HCT116 (cell line): ENCODE measurements at regions of chr6 and their contacts with region 1.

Region 1: GRCh38 chr6:113428702-113429101 is 428.4 kb upstream of the MARCKS start:
- DNase-seq: no peak
- ATAC-seq: no peak
- H3K4me3 ChIP-seq: no peak overlapping the region
- H3K27ac ChIP-seq: no peak overlapping the region
- H3K4me1 ChIP-seq: peaks cover 0 to 3% of the 10 kb centered on the region in 2 experiments; a peak in 1 of 4 replicates
- H3K27me3 ChIP-seq: no peaks in the 10 kb centered on the region
- CTCF ChIP-seq: no peak
- POLR2A ChIP-seq: no peak
- RAD21 ChIP-seq: no peak

Region 2: GRCh38 chr6:112180095-112180820 is 1248.4 kb before region 1 on chr6:
- CTCF ChIA-PET with region 1: no interaction called
- POLR2A ChIA-PET with region 1: no interaction called
- RAD21 ChIA-PET with region 1: no interaction called
- intact Hi-C with region 1: no loop called
- DNase-seq: peak; percentile 74
- ATAC-seq: peak; percentile 86
- H3K4me3 ChIP-seq: no peak overlapping the region
- H3K27ac ChIP-seq: no peak overlapping the region
- H3K4me1 ChIP-seq: no peaks in the 10 kb centered on the region
- H3K27me3 ChIP-seq: no peaks in the 10 kb centered on the region
- CTCF ChIP-seq: peak; percentile 59 to 91 (median 84)
- POLR2A ChIP-seq: no peak
- RAD21 ChIP-seq: peak; percentile 94

Region 3: DNA sequence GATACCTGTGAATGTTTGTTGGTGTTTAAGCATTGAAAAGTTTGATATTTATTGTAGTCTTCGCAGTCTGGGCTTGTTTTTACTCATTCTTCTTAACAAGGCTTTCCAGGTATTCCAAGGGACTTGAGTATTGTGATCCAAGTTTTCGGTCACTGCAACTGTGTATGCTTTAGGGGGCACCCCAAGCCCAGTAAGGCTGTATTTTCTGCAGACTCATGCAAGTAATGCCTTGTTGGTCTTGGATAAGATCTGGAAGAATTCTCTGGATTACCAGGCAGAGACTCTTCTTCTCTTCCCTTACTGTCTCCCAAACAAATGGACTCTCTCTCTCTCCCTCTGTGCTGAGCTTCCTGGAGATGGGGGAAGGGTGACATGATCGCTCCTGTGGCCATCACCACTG is 999.5 kb before region 1 on chr6:
- CTCF ChIA-PET with region 1: no interaction called
- POLR2A ChIA-PET with region 1: no interaction called
- RAD21 ChIA-PET with region 1: no interaction called
- intact Hi-C with region 1: loop called (anchors 5 kb)
- DNase-seq: no peak
- ATAC-seq: no peak; the same call in 1 of the 2 replicates
- H3K4me3 ChIP-seq: no peak overlapping the region
- H3K27ac ChIP-seq: no peak overlapping the region
- H3K4me1 ChIP-seq: no peaks in the 10 kb centered on the region
- H3K27me3 ChIP-seq: no peaks in the 10 kb centered on the region
- CTCF ChIP-seq: no peak
- POLR2A ChIP-seq: no peak
- RAD21 ChIP-seq: peak; percentile 43; the same call in 1 of the 2 replicates